OCI-LY7 (cell line): ENCODE measurements at regions of chr17 and their contacts with region 1.

Region 1: DNA sequence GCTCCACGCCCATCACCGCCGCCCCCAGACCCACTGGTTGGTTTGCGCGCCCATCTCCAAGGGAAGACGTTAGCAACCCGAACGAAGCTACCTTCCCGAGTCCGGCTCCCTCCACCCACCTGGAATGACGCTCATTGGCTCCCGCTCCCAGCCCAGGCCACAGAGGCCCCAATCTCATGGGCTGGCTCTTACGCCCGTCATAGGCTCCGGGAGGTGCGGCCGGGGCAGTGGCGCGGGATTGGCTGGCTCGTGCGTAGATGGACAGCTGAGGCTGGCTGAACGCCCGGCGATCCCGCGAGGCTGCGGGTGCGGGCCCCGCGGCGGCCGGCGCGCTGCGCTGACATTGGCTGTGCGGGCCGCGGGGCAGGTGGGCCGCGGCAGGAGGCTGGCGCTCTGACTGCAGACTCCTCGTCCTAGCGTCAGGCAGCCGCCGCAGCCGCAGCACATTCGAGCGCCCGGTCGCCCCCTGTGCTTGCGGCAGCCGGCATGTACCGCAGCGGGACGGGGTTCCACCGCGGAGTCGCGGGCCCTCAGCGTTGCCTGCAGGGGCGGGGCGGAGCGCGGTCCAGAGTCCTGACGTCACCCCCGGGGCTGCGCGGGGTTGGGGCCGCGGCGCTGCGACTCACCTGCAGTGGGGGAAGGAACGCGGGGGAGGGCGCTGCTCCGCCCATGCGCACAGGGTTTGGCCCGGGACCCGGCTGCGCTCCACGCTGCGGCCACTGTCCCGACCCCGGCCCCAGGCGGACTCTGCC is 453 bp upstream of the MYH10 start:
- DNase-seq: peak; percentile 99
- H3K4me3 ChIP-seq: peak overlapping the region; percentile 98
- H3K27ac ChIP-seq: peak overlapping the region; percentile 57
- H3K4me1 ChIP-seq: peaks cover 23% of the 10 kb centered on the region
- CTCF ChIP-seq: peak; percentile 63

Region 2: GRCh38 chr17:8073627-8074484 is 557.1 kb before region 1 on chr17:
- CTCF ChIA-PET with region 1: interaction called, 14 read pairs
- POLR2A ChIA-PET with region 1: no interaction called
- intact Hi-C with region 1: no loop called
- DNase-seq: peak; percentile 83
- H3K4me3 ChIP-seq: no peak overlapping the region
- H3K27ac ChIP-seq: no peak overlapping the region
- H3K4me1 ChIP-seq: peaks cover 4% of the 10 kb centered on the region
- CTCF ChIP-seq: peak; percentile 92

Region 3: DNA sequence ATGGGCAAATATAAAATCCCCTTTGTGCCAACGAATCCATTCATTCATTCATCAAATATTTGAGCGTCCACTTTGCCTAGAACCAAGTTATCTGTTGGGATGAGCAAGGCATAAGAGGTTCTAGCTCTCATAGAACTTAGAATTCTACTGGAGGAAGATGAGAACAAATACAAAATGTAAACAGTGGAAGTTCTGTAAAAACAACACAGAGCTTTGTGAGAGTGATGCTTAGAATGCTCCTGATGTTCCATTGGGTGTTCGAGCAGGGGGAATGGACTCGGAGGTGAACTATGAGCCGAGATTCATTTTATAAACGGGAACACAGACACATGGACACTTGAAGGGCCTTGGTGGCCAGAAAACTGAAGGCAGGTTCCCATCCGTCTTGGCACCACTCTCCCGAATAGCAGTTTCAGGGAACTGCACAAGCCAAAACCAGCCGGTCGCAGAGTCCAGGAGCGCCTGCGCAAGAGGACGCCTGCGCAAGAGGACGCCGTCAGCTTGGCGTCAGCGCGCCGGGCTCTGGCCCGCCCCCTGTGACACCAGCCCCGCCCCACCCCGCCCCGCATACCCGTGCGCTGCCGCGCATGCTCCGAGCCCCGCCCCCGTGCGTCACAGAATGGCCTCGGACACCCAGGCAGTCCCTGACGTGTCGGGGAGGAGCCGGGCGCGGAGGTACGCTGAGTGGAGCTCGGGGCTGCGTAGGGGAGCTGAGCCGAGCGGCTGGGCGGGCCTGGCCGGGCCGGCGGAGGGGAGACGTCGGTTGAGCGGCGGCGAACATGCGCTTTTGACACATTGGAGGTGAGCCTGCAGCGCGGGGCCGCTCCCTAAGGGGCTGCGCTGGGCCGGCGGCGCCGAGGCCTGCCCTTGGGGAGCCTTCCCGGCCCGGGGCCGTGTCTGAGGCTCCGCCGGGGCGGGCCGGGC is 195.5 kb before region 1 on chr17 and contains the start of gene NDEL1:
- CTCF ChIA-PET with region 1: no interaction called
- POLR2A ChIA-PET with region 1: interaction called, 4 read pairs
- intact Hi-C with region 1: loop called (anchors 5 kb)
- DNase-seq: peak; percentile 97
- H3K4me3 ChIP-seq: peak within 1 kb of the TSS; percentile 99
- H3K27ac ChIP-seq: peak within 1 kb of the TSS; percentile 70
- H3K4me1 ChIP-seq: peaks cover 15% of the 10 kb centered on the region
- CTCF ChIP-seq: no peak
- total RNA-seq, gene NDEL1: 37.9 and 40.0 TPM in 2 replicates

Region 4: DNA sequence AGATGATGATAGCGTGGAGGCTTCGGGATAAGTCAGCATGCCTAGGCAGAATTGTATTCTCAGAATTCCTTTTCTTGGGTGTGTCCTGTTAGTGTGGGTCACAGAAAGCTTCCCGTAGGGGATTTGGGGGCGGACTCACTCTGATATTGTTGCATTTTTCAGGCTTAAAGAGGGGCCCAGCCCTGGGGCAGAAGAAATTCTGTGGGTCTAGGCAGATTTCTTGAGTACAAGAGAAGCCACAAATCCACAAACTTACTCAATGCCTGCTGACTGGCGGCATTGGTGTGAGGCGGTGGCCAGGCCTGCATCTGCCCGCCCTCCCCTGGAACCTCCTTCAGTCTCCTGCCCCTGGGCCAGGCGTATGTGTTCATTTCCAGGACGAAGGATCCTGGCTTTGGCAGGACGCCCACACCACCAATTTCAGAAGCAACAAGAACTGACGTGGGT is 96.1 kb after region 1 on chr17:
- CTCF ChIA-PET with region 1: no interaction called
- POLR2A ChIA-PET with region 1: no interaction called
- intact Hi-C with region 1: no loop called
- DNase-seq: no peak
- H3K4me3 ChIP-seq: no peak overlapping the region
- H3K27ac ChIP-seq: no peak overlapping the region
- H3K4me1 ChIP-seq: no peaks in the 10 kb centered on the region
- CTCF ChIP-seq: no peak

Region 5: GRCh38 chr17:8965394-8966168 is 334.6 kb after region 1 on chr17 and contains the start of gene PIK3R5:
- CTCF ChIA-PET with region 1: no interaction called
- POLR2A ChIA-PET with region 1: no interaction called
- intact Hi-C with region 1: loop called (anchors 10 kb)
- DNase-seq: peak; percentile 77
- H3K4me3 ChIP-seq: peak within 1 kb of the TSS; percentile 65
- H3K27ac ChIP-seq: no peak within 1 kb of the TSS
- H3K4me1 ChIP-seq: peaks cover 5% of the 10 kb centered on the region
- CTCF ChIP-seq: no peak
- total RNA-seq, gene PIK3R5: 0.76 and 1.2 TPM in 2 replicates